CD8-positive, alpha-beta T cell (primary cell): ENCODE measurements at regions of chr11 and their contacts with region 1.

Region 1: DNA sequence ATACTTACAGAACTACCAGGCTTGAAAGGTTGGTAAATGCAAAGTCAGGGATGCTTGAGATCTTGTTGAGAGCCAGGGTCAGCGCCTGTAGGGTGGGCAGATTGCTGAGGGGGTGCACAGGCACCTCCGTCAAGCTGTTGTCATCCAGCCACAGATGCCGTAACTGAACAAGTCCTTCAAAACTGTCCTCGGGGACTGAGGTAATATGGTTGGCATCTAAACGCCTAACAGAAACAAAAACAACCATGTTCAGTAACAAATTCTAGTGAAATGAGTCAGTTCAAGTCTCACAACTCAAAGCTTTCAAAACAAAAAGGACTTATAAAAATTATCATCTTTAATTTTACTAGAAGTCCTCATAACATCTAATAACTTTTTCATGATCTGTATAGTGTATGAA is 22.2 kb upstream of the CCDC34 start:
- DNase-seq: no peak
- ATAC-seq: no peak
- H3K4me3 ChIP-seq: no peak overlapping the region
- H3K4me3 Mint-ChIP-seq: no peak overlapping the region
- H3K27ac ChIP-seq: no peak overlapping the region
- H3K27ac Mint-ChIP-seq: no peak overlapping the region
- H3K4me1 ChIP-seq: no peaks in the 10 kb centered on the region
- H3K4me1 Mint-ChIP-seq: no peaks in the 10 kb centered on the region
- H3K27me3 ChIP-seq: no peaks in the 10 kb centered on the region
- H3K27me3 Mint-ChIP-seq: peaks cover 2% of the 10 kb centered on the region
- CTCF ChIP-seq: no peak

Region 2: GRCh38 chr11:27347361-27348339 is 37.6 kb before region 1 on chr11:
- CTCF ChIA-PET with region 1: no interaction called
- POLR2A ChIA-PET with region 1: no interaction called
- intact Hi-C with region 1: loop called in 1 of 2 experiments (anchors 5 kb)
- DNase-seq: no peak
- ATAC-seq: no peak
- H3K4me3 ChIP-seq: no peak overlapping the region
- H3K4me3 Mint-ChIP-seq: no peak overlapping the region
- H3K27ac ChIP-seq: no peak overlapping the region
- H3K27ac Mint-ChIP-seq: no peak overlapping the region
- H3K4me1 ChIP-seq: no peaks in the 10 kb centered on the region
- H3K4me1 Mint-ChIP-seq: no peaks in the 10 kb centered on the region
- H3K27me3 ChIP-seq: no peaks in the 10 kb centered on the region
- H3K27me3 Mint-ChIP-seq: no peaks in the 10 kb centered on the region
- CTCF ChIP-seq: no peak